CD8-positive, alpha-beta T cell (primary cell): ENCODE measurements at regions of chr11 and their contacts with region 1.

Region 1: DNA sequence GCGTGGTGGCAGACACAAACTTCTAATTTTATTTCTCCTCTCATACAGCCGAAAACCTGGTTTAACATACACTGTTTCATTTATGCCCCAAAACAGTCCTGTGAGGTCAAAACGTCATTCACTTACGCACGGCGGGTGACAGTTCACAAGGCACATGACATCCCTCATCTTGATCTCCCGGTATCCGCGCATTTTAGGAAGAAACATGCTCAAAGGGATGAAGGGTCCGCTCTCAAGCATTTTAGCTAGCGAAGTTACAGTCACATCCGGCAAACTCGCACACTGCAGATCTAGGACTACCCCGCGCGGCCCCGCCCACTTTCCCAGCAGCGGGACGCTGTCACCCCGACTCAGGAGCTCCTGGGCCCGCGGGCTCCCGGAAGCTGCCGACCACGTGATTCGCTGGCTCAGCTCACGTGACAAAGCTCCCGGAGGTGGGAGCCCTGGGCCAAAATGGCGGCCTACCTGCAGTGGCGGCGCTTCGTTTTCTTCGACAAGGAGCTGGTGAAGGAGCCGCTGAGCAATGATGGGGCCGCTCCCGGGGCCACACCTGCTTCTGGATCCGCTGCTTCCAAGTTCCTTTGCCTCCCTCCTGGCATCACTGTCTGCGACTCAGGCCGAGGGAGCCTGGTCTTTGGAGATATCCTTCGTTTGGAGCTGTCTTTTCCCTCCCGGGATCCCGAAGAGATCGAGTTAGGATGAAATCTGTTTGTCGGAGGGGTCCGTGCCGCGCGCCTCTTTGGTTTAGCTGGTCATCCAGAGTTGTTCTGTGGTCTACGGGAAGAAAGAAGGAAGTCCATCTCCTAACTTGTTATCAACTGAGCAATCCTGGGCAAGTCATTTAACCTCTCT is at the start of gene VPS11:
- DNase-seq: peak; percentile 94 to 99 (median 98)
- ATAC-seq: peak; percentile 92
- H3K4me3 ChIP-seq: peak within 1 kb of the TSS; percentile 83 to 88
- H3K4me3 Mint-ChIP-seq: peak within 1 kb of the TSS; percentile 89
- H3K27ac ChIP-seq: peak within 1 kb of the TSS; percentile 79 to 94
- H3K27ac Mint-ChIP-seq: peak within 1 kb of the TSS; percentile 97
- H3K4me1 ChIP-seq: peaks cover 29% of the 10 kb centered on the region
- H3K4me1 Mint-ChIP-seq: peaks cover 51% of the 10 kb centered on the region
- H3K27me3 ChIP-seq: no peaks in the 10 kb centered on the region
- H3K27me3 Mint-ChIP-seq: no peaks in the 10 kb centered on the region
- CTCF ChIP-seq: no peak
- total RNA-seq, gene VPS11: 91.0 to 109 TPM

Region 2: DNA sequence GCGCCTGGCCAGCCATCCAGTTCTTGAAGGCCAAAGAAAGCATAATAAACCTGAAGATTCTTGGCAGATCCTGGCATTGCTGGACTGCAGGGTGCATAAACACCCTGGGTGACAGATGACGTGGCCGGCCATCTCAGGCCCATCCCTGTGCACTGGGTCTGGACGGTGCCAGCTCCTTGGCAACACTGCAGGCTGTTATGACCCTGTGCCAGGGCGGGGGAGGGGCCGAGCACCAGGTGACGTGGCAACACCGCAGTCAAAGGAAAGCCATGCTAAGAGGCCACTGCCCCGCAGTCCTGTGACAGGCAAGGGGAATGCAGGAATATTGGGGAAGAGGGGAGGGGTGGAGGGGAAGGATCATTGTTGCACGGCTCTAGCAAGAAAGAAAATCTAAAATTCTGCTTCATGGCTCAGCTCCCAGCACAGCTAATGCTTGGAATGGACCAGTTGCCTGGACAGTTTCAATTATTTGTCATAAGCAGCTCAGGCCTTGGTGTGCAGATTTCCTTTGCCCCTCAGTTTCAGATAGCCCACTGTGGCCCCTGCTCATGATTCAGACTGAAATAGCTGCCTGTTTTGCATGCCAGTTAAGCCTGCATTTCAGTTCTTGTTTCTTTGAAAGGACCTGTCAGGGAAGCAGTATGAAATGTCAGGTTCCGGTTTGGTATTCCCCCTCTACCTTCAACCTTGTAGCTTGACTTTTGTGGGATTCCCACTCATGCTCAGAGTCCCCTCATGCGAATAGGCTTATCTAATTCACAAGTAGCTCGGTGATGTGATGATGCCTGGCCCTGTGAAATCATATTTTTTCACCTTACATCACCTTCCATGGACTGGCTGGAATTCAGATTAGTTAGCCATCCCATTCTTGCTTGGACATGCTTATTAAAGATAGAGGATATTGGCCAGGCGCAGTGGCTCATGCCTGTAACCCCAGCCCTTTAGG is 246.9 kb before region 1 on chr11:
- CTCF ChIA-PET with region 1: no interaction called
- POLR2A ChIA-PET with region 1: no interaction called
- intact Hi-C with region 1: no loop called
- DNase-seq: peak in 3 of 9 experiments; percentile 20 to 60 (median 26)
- ATAC-seq: no peak
- H3K4me3 ChIP-seq: no peak overlapping the region
- H3K4me3 Mint-ChIP-seq: no peak overlapping the region
- H3K27ac ChIP-seq: no peak overlapping the region
- H3K27ac Mint-ChIP-seq: no peak overlapping the region
- H3K4me1 ChIP-seq: no peaks in the 10 kb centered on the region
- H3K4me1 Mint-ChIP-seq: peaks cover 6% of the 10 kb centered on the region
- H3K27me3 ChIP-seq: no peaks in the 10 kb centered on the region
- H3K27me3 Mint-ChIP-seq: no peaks in the 10 kb centered on the region
- CTCF ChIP-seq: no peak

Region 3: DNA sequence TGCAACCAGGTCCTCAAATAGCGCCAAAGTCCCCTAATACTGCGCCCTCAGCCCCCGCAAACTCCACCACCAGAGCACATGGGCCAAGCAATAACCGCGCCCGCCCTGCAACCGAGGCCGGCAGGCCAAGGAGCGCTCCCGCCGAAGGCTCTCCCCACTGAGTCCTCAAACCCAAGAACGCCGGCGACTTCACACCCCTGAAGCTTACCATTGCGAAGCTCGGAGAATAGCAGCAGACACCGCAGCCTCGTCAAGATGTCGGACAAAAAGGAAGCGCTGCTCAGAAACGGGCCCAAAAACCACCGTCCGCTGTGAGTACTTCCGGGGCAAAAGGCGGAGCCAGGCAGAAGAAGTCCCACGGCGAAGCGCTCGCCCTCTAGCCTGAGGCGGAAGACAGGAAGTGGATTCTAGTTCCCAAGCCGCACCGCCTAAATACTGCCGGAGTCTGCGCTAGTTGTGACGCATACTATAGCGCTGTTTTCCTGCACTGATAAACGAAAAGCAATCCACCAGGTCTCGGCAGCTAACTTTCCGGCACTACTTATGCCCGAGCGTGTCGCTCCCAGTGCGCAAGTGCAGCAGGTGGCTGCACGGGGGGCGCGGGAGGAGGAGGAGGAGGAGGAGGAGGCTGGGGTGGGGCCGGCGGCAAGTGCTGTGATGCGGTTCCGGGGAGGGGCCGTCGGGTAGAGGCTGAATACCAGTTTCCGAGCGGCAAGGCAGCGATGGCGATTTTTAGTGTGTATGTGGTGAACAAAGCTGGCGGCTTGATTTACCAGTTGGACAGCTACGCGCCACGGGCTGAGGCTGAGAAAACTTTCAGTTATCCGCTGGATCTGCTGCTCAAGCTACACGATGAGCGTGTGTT is 49.3 kb before region 1 on chr11 and contains the starts of genes RPS25 and TRAPPC4:
- CTCF ChIA-PET with region 1: no interaction called
- POLR2A ChIA-PET with region 1: interaction called, 12 read pairs
- intact Hi-C with region 1: loop called (anchors 1 kb)
- DNase-seq: peak; percentile 90 to 99 (median 95)
- ATAC-seq: peak; percentile 86
- H3K4me3 ChIP-seq: peak within 1 kb of the TSS; percentile 98
- H3K4me3 Mint-ChIP-seq: peak within 1 kb of the TSS; percentile 99
- H3K27ac ChIP-seq: peak within 1 kb of the TSS; percentile 98 to 99
- H3K27ac Mint-ChIP-seq: peak within 1 kb of the TSS; percentile 99
- H3K4me1 ChIP-seq: peaks cover 44% of the 10 kb centered on the region
- H3K4me1 Mint-ChIP-seq: peaks cover 55% of the 10 kb centered on the region
- H3K27me3 ChIP-seq: no peaks in the 10 kb centered on the region
- H3K27me3 Mint-ChIP-seq: no peaks in the 10 kb centered on the region
- CTCF ChIP-seq: no peak
- total RNA-seq, gene RPS25: 2,737 to 2,869 TPM
- total RNA-seq, gene TRAPPC4: 65.6 to 73.3 TPM

Region 4: DNA sequence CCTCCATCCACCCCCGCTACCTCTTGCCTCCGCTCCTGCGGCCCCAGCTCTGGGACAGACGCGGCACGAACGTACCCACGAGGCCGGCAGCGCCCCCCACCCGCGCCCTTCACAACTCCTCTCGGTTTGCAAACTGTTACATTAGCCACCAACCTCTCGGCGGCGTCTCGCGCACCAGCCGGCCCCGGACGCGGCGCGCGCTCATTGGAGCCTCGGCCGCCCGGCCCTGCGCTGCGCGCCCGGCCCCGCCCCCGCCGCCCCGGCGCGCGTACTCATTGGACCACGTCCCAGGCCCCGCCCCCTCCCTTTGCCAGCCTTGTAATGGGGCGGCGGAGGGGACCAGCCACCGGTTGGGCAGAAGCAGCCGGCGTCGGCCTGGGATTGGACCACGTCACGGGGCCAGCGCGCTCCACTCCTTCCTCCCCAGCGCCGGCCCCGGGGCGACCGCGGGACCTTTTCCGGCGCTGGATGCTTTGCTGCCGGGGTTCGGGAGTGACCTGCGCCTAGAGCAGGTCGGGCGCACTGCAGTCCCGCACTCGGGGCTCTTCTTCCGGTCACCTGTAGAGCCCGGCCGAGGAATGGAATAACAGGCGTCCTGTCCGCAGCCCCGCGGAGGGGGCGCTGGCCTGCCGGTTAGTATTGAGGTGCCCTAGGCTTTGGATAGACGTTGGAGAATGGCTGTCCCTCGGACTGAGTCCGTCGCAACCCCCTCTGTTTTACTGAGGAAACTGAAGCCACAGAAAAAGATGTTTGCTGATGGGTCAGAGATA is 10.4 kb before region 1 on chr11 and contains the start of gene HYOU1:
- CTCF ChIA-PET with region 1: interaction called, 9 read pairs
- POLR2A ChIA-PET with region 1: interaction called, 28 read pairs
- intact Hi-C with region 1: loop called (anchors 1 kb)
- DNase-seq: peak; percentile 97 to 99 (median 98)
- ATAC-seq: peak; percentile 96
- H3K4me3 ChIP-seq: peak within 1 kb of the TSS; percentile 82 to 83
- H3K4me3 Mint-ChIP-seq: peak within 1 kb of the TSS; percentile 96
- H3K27ac ChIP-seq: peak within 1 kb of the TSS; percentile 81 to 85
- H3K27ac Mint-ChIP-seq: peak within 1 kb of the TSS; percentile 96
- H3K4me1 ChIP-seq: peaks cover 21% of the 10 kb centered on the region
- H3K4me1 Mint-ChIP-seq: peaks cover 35% of the 10 kb centered on the region
- H3K27me3 ChIP-seq: no peaks in the 10 kb centered on the region
- H3K27me3 Mint-ChIP-seq: no peaks in the 10 kb centered on the region
- CTCF ChIP-seq: no peak
- total RNA-seq, gene HYOU1: 106 to 109 TPM

Region 5: DNA sequence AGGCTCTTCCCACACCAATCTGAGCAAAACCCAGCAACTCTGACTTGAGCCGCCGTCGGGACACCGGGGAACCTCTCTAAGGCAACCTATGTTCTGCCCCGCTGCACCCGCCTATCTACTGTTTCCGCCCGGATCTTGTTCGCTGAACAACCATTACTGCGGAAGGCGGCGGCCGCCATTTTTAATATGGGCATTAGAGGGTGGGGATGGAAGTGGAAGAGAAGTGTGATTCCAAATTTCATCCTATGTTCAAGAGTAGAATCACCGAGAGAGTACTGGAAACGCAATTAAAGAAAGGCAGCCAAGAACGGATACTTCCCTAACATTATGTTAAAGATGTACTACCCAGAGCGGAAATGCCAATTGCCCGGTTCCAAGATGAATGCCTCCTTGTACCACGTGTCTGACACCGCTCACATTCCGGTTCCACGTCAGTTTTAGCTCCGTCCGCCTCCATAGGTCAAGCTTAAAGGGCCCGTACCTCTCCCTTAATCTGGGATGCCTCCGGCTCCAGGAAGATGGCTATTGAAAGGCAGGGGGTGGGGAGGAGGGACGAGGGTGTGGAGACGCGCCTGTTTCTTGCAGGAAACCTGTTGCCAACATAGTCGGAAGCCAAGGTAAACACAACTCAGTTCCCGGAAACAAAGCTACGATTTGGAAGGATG is 34.3 kb after region 1 on chr11 and contains the start of gene DPAGT1:
- CTCF ChIA-PET with region 1: interaction called, 4 read pairs
- POLR2A ChIA-PET with region 1: interaction called, 16 read pairs
- intact Hi-C with region 1: loop called in 1 of 2 experiments (anchors 1 kb)
- DNase-seq: peak; percentile 68 to 93 (median 84)
- ATAC-seq: peak; percentile 87
- H3K4me3 ChIP-seq: peak within 1 kb of the TSS; percentile 81 to 87
- H3K4me3 Mint-ChIP-seq: peak within 1 kb of the TSS; percentile 98
- H3K27ac ChIP-seq: peak within 1 kb of the TSS; percentile 94 to 97
- H3K27ac Mint-ChIP-seq: peak within 1 kb of the TSS; percentile 97
- H3K4me1 ChIP-seq: peaks cover 31% of the 10 kb centered on the region
- H3K4me1 Mint-ChIP-seq: peaks cover 53% of the 10 kb centered on the region
- H3K27me3 ChIP-seq: no peaks in the 10 kb centered on the region
- H3K27me3 Mint-ChIP-seq: no peaks in the 10 kb centered on the region
- CTCF ChIP-seq: no peak
- total RNA-seq, gene DPAGT1: 9.4 to 9.9 TPM

Region 6: DNA sequence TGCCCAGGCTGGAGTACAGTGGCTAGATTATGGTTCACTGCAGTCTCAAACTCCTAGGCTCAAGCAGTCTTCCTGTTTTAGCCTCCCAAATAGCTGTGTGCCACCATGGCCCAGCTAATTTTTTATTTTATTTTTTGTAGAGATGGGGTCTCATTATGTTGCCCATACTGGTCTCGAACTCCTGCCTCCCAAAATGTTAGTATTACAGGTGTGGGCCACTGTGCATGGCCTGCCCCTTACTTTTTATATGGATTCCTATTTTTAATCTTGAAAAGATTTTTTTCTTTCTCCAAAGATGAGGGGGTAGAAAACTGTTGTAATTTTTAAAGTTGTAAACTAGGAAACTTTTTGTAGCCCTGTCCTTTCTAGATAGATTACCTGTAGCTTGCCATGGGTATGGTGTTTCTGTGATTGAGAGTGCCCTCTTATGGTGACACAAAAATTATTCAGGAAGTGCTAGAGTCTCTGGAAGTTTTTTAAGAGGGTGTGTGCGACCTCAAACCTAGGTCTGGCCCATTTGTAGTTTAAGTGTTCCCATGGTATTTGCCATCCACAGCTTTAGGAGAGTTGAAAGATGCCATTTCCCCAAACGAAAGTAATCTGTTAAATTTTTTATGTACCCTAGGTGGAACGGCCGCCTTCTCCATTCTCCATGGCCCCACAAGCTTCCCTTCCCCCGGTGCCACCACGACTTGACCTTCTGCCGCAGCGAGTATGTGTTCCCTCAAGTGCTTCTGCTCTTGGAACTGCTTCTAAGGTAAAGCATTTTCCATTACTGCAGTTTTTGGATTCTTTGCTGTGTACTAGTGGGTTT is 217.0 kb after region 1 on chr11:
- CTCF ChIA-PET with region 1: no interaction called
- POLR2A ChIA-PET with region 1: no interaction called
- intact Hi-C with region 1: loop called in 1 of 2 experiments (anchors 10 kb)
- DNase-seq: peak in 2 of 9 experiments; percentile 62 to 78
- ATAC-seq: peak; percentile 96
- H3K4me3 ChIP-seq: no peak overlapping the region
- H3K4me3 Mint-ChIP-seq: no peak overlapping the region
- H3K27ac ChIP-seq: no peak overlapping the region
- H3K27ac Mint-ChIP-seq: peak overlapping the region; percentile 7
- H3K4me1 ChIP-seq: peaks cover 18% of the 10 kb centered on the region
- H3K4me1 Mint-ChIP-seq: peaks cover 34% of the 10 kb centered on the region
- H3K27me3 ChIP-seq: no peaks in the 10 kb centered on the region
- H3K27me3 Mint-ChIP-seq: no peaks in the 10 kb centered on the region
- CTCF ChIP-seq: peak; percentile 59

Region 7: DNA sequence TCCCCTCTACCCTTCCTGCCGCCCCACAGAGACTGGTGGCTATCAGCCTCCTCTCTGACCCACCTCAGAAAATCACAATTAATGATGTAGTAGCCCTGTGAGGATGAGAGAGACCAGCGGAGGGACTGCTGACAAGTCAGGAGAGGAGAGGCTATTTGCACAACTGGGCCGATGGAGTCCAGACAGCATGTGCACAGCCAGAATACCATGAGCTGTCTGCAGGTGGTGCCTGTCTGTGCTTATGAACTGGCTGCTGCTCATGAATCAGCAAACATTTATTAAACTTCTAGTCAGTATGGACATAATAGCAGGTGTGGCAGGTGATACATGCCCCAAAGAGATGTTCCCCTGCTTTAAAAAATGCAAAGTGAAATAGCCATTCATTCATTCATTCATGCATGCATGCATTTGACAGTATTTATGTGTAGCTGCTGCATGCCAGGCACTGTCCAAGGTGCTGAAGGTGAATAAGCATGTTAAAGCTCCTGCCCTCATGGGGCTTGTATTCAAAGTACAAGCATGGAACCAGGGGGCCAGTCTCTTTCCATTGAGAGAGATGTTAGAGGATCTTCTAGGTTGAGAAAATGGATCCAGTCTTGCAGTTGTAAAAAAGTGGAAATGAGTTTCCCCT is 1585.2 kb after region 1 on chr11:
- CTCF ChIA-PET with region 1: no interaction called
- POLR2A ChIA-PET with region 1: no interaction called
- intact Hi-C with region 1: no loop called
- DNase-seq: no peak
- ATAC-seq: no peak
- H3K4me3 ChIP-seq: no peak overlapping the region
- H3K4me3 Mint-ChIP-seq: no peak overlapping the region
- H3K27ac ChIP-seq: no peak overlapping the region
- H3K27ac Mint-ChIP-seq: no peak overlapping the region
- H3K4me1 ChIP-seq: no peaks in the 10 kb centered on the region
- H3K4me1 Mint-ChIP-seq: no peaks in the 10 kb centered on the region
- H3K27me3 ChIP-seq: no peaks in the 10 kb centered on the region
- H3K27me3 Mint-ChIP-seq: peaks cover 8% of the 10 kb centered on the region
- CTCF ChIP-seq: no peak